Mammary epithelial cell (primary cell): ENCODE measurements at regions of chr1 and their contacts with region 1.

Region 1: GRCh38 chr1:219805193-219805592 is 123.2 kb downstream of the SLC30A10 start:
- DNase-seq: no peak
- H3K4me3 ChIP-seq: no peak overlapping the region
- H3K27ac ChIP-seq: no peak overlapping the region
- H3K4me1 ChIP-seq: no peaks in the 10 kb centered on the region
- H3K27me3 ChIP-seq: peaks cover 4% of the 10 kb centered on the region
- CTCF ChIP-seq: peak in 1 of 2 donors; percentile 29

Region 2: DNA sequence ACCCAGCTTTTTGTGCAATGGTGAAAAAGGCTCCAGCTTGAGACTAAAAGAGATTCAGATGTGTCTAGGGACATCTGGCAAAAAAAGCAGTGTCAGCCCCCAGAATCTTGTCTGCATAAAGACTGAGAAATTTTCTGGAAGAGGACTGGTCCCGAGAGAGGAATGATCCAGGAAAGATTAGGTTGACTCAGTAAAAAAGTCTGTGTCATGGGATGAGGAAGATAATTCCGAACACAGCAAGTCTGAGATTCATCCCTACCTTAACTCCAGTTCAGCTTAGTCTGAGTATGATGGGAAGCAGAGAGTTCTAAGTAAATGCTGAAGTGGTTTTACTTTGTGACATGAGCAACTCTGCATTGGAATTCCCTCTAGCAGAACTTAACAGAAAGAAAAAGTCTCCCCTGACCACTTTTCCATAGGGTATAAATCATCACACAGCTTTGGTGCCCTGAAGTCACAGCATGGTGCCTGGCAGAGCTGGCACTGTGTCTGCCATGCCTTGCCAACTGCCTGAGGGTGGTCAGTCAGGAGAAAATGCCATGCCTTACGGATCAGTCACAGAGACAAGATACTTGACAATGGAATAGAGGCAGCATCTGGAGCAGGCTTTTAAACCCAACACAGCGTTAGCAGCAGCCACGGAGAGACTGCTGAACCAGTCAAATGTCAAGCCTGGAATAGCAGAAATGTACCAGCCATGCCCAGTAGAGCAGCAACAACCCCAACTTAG is 345.7 kb before region 1 on chr1:
- CTCF ChIA-PET with region 1: no interaction called
- dilution Hi-C with region 1: no loop called
- in situ Hi-C with region 1: no loop called
- intact Hi-C with region 1: no loop called
- DNase-seq: no peak
- H3K4me3 ChIP-seq: no peak overlapping the region
- H3K27ac ChIP-seq: no peak overlapping the region
- H3K4me1 ChIP-seq: no peaks in the 10 kb centered on the region
- H3K27me3 ChIP-seq: no peaks in the 10 kb centered on the region
- CTCF ChIP-seq: no peak

Region 3: DNA sequence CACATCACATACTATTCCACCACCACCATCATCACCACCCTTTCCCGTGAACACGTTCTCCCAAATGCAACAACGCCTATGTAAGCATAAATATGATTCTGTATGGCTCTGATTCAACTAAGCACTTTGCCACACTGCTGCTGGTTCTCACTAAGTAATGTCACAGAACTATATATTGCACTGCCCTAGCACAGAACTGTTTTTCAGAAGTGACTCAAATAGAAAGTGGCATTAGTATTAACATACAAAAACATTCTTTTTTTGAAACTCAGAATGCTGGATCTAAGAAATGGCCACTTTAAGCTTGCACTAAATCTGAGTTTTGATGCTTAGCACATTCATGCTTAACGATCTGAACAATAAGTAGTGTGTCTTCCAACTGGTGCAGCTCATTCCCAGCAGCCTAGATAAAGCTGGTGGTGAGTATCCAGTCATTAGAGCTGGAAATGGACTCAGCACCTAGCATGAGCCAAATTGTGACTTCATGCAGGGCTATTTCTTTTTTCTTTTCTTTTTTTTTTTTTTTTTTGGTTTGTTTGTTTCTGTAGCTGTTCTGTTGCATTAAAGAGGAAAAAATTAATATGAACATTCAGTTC is 146.1 kb before region 1 on chr1:
- CTCF ChIA-PET with region 1: no interaction called
- dilution Hi-C with region 1: no loop called
- in situ Hi-C with region 1: no loop called
- intact Hi-C with region 1: loop called (anchors 5 kb)
- DNase-seq: no peak
- H3K4me3 ChIP-seq: no peak overlapping the region
- H3K27ac ChIP-seq: no peak overlapping the region
- H3K4me1 ChIP-seq: no peaks in the 10 kb centered on the region
- H3K27me3 ChIP-seq: peaks cover 2% of the 10 kb centered on the region
- CTCF ChIP-seq: no peak

Region 4: GRCh38 chr1:219771080-219771479 is 34.1 kb before region 1 on chr1:
- CTCF ChIA-PET with region 1: no interaction called
- dilution Hi-C with region 1: no loop called
- in situ Hi-C with region 1: no loop called
- intact Hi-C with region 1: no loop called
- DNase-seq: peak; percentile 95
- H3K4me3 ChIP-seq: no peak overlapping the region
- H3K27ac ChIP-seq: no peak overlapping the region
- H3K4me1 ChIP-seq: peaks cover 7% of the 10 kb centered on the region
- H3K27me3 ChIP-seq: no peaks in the 10 kb centered on the region
- CTCF ChIP-seq: no peak

Region 5: GRCh38 chr1:219988387-219988786 is 183.2 kb after region 1 on chr1:
- CTCF ChIA-PET with region 1: no interaction called
- dilution Hi-C with region 1: no loop called
- in situ Hi-C with region 1: no loop called
- intact Hi-C with region 1: no loop called
- DNase-seq: no peak
- H3K4me3 ChIP-seq: no peak overlapping the region
- H3K27ac ChIP-seq: no peak overlapping the region
- H3K4me1 ChIP-seq: no peaks in the 10 kb centered on the region
- H3K27me3 ChIP-seq: no peaks in the 10 kb centered on the region
- CTCF ChIP-seq: no peak